Naive thymus-derived CD4-positive, alpha-beta T cell (primary cell): ENCODE measurements at regions of chr10 and their contacts with region 1.

Region 1: GRCh38 chr10:80046629-80047441 is 31.6 kb upstream of the TMEM254 start:
- DNase-seq: peak; percentile 38 to 74 (median 58)
- ATAC-seq: peak; percentile 85
- H3K4me3 ChIP-seq: no peak overlapping the region
- H3K4me3 Mint-ChIP-seq: no peak overlapping the region
- H3K27ac ChIP-seq: no peak overlapping the region
- H3K27ac Mint-ChIP-seq: no peak overlapping the region
- H3K4me1 ChIP-seq: no peaks in the 10 kb centered on the region
- H3K4me1 Mint-ChIP-seq: peaks cover 0 to 4% (median 0%) of the 10 kb centered on the region in 7 donors
- H3K27me3 ChIP-seq: no peaks in the 10 kb centered on the region
- H3K27me3 Mint-ChIP-seq: peaks cover 0 to 3% (median 0%) of the 10 kb centered on the region in 5 donors

Region 2: GRCh38 chr10:79542626-79543025 is 504.2 kb before region 1 on chr10:
- CTCF ChIA-PET with region 1: no interaction called
- POLR2A ChIA-PET with region 1: no interaction called
- intact Hi-C with region 1: loop called in 1 of 2 experiments (anchors 1 kb)
- DNase-seq: no peak
- ATAC-seq: peak; percentile 50
- H3K4me3 ChIP-seq: no peak overlapping the region
- H3K4me3 Mint-ChIP-seq: no peak overlapping the region
- H3K27ac ChIP-seq: no peak overlapping the region
- H3K27ac Mint-ChIP-seq: peak overlapping the region in 1 of 9 donors; percentile 3
- H3K4me1 ChIP-seq: peaks cover 0 to 2% of the 10 kb centered on the region in 2 donors
- H3K4me1 Mint-ChIP-seq: peaks cover 4 to 50% (median 10%) of the 10 kb centered on the region in 7 donors
- H3K27me3 ChIP-seq: no peaks in the 10 kb centered on the region
- H3K27me3 Mint-ChIP-seq: no peaks in the 10 kb centered on the region

Region 3: DNA sequence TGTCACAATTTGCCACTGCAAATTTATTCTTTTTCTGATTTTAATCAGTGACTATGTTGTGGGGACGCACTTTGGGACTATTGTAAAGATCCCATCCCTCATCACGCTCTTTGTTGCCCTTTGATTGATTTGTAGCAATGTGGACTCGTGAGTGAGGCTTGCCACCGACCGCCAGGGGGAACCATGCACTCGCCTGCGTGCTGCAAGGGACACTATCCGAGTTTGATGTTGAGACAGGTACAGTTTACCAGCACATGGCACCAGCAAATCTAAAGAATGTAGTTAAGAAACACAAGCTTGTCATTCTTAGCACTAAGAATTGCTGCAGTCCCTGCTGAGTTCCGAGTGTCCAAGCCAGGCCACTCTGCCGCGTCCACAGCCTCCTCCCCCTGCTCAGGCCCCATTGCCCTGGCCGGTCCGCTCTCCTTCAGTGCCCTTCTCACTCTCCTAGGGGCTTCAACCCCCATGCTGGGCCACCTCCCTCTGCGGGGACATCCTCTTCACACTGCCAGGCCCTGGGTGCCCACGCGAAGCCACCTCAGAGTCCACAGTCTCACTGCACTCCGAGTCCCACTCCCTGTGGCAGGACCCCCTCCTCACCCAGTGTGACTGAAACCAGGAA is 484.6 kb before region 1 on chr10:
- CTCF ChIA-PET with region 1: no interaction called
- POLR2A ChIA-PET with region 1: no interaction called
- intact Hi-C with region 1: loop called in 1 of 2 experiments (anchors 1 kb)
- DNase-seq: peak; percentile 26 to 67 (median 48)
- ATAC-seq: peak; percentile 75
- H3K4me3 ChIP-seq: no peak overlapping the region
- H3K4me3 Mint-ChIP-seq: peak overlapping the region in 7 of 10 donors; percentile 1 to 53 (median 33)
- H3K27ac ChIP-seq: no peak overlapping the region
- H3K27ac Mint-ChIP-seq: no peak overlapping the region
- H3K4me1 ChIP-seq: no peaks in the 10 kb centered on the region
- H3K4me1 Mint-ChIP-seq: peaks cover 0 to 9% (median 7%) of the 10 kb centered on the region in 7 donors
- H3K27me3 ChIP-seq: no peaks in the 10 kb centered on the region
- H3K27me3 Mint-ChIP-seq: peaks cover 11 to 24% (median 23%) of the 10 kb centered on the region in 5 donors

Region 4: GRCh38 chr10:79910344-79910743 is 136.5 kb before region 1 on chr10:
- CTCF ChIA-PET with region 1: no interaction called
- POLR2A ChIA-PET with region 1: no interaction called
- intact Hi-C with region 1: loop called in 1 of 2 experiments (anchors 5 kb)
- DNase-seq: no peak
- ATAC-seq: no peak
- H3K4me3 ChIP-seq: no peak overlapping the region
- H3K4me3 Mint-ChIP-seq: no peak overlapping the region
- H3K27ac ChIP-seq: no peak overlapping the region
- H3K27ac Mint-ChIP-seq: no peak overlapping the region
- H3K4me1 ChIP-seq: no peaks in the 10 kb centered on the region
- H3K4me1 Mint-ChIP-seq: peaks cover 0 to 4% (median 3%) of the 10 kb centered on the region in 7 donors
- H3K27me3 ChIP-seq: no peaks in the 10 kb centered on the region
- H3K27me3 Mint-ChIP-seq: peaks cover 0 to 64% (median 33%) of the 10 kb centered on the region in 5 donors

Region 5: GRCh38 chr10:80064120-80064886 is 17.5 kb after region 1 on chr10:
- CTCF ChIA-PET with region 1: interaction called, 13 read pairs
- POLR2A ChIA-PET with region 1: interaction called, 3 read pairs
- intact Hi-C with region 1: no loop called
- DNase-seq: no peak
- ATAC-seq: no peak
- H3K4me3 ChIP-seq: no peak overlapping the region
- H3K4me3 Mint-ChIP-seq: no peak overlapping the region
- H3K27ac ChIP-seq: no peak overlapping the region
- H3K27ac Mint-ChIP-seq: no peak overlapping the region
- H3K4me1 ChIP-seq: no peaks in the 10 kb centered on the region
- H3K4me1 Mint-ChIP-seq: no peaks in the 10 kb centered on the region
- H3K27me3 ChIP-seq: no peaks in the 10 kb centered on the region
- H3K27me3 Mint-ChIP-seq: peaks cover 0 to 5% (median 0%) of the 10 kb centered on the region in 5 donors